ENCODE measurements at regions of chr19 and their contacts with region 1.

Region 1: GRCh38 chr19:11324079-11324661 is 15.3 kb downstream of the RAB3D start:
- DNase-seq: peak; percentile 97 to 99 (median 99)
- H3K4me3 ChIP-seq: peak overlapping the region in 2 of 3 experiments; percentile 15 to 77
- H3K4me3 Mint-ChIP-seq: peak overlapping the region; percentile 64 to 83
- H3K27ac ChIP-seq: peak overlapping the region; percentile 94 to 97
- H3K27ac Mint-ChIP-seq: peak overlapping the region; percentile 91 to 99 (median 99)
- H3K4me1 ChIP-seq: peaks cover 72 to 80% of the 10 kb centered on the region in 2 donors
- H3K4me1 Mint-ChIP-seq: peaks cover 77% of the 10 kb centered on the region
- H3K27me3 ChIP-seq: no peaks in the 10 kb centered on the region
- H3K27me3 Mint-ChIP-seq: peaks cover 0 to 4% (median 0%) of the 10 kb centered on the region in 3 donors
- CTCF ChIP-seq: no peak

Region 2: DNA sequence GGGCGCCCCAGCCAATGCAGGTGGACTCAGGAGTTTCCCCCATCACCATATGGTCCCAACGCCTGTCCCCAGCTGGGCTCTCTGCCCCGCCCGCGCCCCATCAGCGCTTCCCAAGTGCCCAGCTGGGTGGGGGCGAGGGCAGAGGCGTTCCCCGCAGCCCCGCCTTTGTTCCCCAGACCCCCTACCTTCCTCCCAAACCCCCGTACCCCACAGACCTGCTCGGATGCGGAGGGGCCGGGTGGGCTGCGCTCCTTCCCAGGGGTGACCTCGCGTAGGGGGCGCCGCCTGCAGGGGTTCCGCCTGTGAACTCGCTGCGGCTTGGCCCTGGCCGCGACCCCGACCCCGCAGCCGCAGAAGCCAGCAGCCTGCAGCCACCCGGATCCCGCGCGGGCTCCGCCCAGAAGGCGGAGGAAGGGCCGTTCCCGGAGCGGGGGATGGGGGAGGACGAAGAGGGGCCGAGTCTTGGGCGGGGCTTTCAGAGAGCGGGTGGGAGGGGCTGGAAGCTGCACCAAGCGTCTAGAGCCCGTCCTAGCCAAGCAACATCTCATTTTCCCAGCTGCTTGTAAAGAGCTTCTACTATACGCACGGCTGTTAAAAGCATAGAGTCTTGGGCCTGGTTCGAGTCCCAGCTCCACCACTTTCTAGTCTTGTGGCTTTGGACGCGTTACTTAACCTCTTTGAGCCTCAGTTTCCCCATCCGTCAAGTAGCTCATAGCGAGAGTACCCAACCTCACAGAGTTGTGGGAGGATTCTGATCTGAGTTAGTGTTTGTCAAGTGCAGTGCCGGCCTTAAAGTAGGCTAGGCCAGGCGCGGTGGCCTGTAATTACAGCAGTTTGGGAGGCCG is 15.3 kb after region 1 on chr19 and contains the start of gene RAB3D:
- intact Hi-C with region 1: loop called in 1 of 2 experiments (anchors 2 kb)
- DNase-seq: peak; percentile 74 to 88 (median 80)
- H3K4me3 ChIP-seq: peak within 1 kb of the TSS; percentile 66 to 99 (median 98)
- H3K4me3 Mint-ChIP-seq: peak within 1 kb of the TSS; percentile 91 to 99
- H3K27ac ChIP-seq: peak within 1 kb of the TSS; percentile 54 to 85
- H3K27ac Mint-ChIP-seq: peak within 1 kb of the TSS; percentile 85 to 97 (median 91)
- H3K4me1 ChIP-seq: peaks cover 50 to 64% of the 10 kb centered on the region in 2 donors
- H3K4me1 Mint-ChIP-seq: peaks cover 40% of the 10 kb centered on the region
- H3K27me3 ChIP-seq: no peaks in the 10 kb centered on the region
- H3K27me3 Mint-ChIP-seq: peaks cover 0 to 2% (median 0%) of the 10 kb centered on the region in 3 donors
- CTCF ChIP-seq: no peak
- polyA plus RNA-seq, gene RAB3D: 52.9 to 78.1 (median 60.8) TPM